Activated naive CD8-positive, alpha-beta T cell treated with anti-CD3 and anti-CD28 coated beads, Interleukin-2, amount 10 ng/mL, durations not matched to agents 7 days and 5 days (primary cell): ENCODE measurements at regions of chr17 and their contacts with region 1.

Region 1: GRCh38 chr17:28571255-28572122 is at the start of gene PIGS:
- DNase-seq: peak; percentile 92
- ATAC-seq: peak; percentile 99
- H3K4me3 Mint-ChIP-seq: peak within 1 kb of the TSS; percentile 95
- H3K27ac Mint-ChIP-seq: peak within 1 kb of the TSS; percentile 94
- H3K4me1 Mint-ChIP-seq: peaks cover 42% of the 10 kb centered on the region
- H3K27me3 Mint-ChIP-seq: no peaks in the 10 kb centered on the region
- total RNA-seq, gene PIGS: 60.5 to 63.1 TPM

Region 2: DNA sequence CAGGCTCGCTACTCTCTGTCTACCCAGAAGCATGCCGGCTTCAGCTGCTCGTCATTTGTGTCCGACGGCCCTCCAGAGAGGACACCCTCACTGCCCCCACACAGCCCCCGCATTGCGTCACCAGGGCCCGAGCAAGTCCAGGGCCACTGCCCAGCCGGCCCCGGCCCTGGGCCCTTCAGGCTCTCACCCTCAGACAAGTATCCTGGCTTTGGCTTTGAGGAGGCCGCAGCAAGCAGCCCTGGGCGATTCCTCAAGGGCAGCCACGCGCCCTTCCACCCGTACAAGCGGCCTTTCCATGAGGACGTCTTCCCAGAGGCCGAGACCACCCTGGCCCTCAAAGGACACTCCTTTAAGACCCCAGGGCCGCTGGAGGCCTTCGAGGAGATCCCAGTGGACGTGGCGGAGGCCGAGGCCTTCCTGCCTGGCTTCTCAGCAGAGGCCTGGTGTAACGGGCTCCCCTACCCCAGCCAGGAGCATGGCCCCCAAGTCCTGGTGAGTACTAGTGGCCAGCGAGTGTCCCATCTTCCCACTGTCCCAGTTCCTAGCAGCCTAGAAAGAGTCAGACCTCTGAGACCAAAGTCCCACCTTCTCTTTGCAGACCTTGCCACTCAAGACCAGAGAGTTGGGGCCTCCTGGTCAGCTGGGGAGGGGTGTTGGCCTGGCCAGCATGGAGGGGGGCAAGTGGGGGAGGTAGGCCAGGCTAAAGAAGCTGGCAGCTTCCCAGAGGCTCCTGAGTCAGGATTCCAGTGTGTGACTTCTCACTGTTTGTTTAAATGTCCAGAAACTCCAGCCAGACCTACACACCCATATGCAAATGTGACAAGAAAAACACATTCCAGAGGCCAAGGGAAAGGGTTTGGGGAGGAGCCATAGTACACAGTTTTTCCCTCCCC is 46.8 kb before region 1 on chr17:
- POLR2A ChIA-PET with region 1: no interaction called
- DNase-seq: no peak
- ATAC-seq: no peak
- H3K4me3 Mint-ChIP-seq: no peak overlapping the region
- H3K27ac Mint-ChIP-seq: no peak overlapping the region
- H3K4me1 Mint-ChIP-seq: no peaks in the 10 kb centered on the region
- H3K27me3 Mint-ChIP-seq: no peaks in the 10 kb centered on the region

Region 3: DNA sequence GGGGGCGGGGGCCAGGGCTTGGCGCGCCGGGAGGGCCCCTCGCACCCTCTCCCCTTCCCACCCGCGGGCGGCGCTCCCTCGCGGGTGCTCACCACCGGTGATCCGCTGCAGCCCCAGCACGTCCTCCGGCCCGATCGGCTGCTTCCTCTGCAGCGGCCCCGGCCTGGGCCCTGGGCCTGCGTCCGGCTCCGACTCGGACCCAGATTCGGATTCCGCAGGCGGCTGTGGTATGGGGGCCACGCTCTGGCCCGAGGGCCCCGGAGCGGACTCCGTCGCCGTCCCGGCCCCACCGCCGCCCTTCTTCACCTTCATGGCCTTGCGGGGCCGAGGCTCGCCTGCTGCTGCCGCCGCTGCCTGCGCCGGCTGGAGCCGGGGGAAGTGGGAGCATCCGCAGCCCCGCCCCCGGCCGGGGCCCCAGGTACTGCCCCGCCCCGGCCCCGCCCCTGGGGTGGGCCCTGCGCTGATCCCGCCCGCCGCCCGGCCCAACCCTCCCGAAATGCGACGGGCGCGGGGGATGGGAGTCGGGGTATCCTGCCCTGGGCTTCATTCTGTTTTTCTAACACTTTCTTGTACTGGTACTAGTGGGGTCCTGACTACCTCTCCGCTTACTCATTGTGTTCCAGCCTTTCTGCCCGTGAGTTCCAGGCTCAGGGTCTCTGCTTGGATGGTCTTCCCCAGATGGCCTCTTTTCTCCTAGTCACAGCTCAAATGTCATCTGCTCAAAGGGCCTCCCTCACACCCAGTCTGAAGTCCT is 19.1 kb before region 1 on chr17 and contains the start of gene UNC119:
- POLR2A ChIA-PET with region 1: interaction called, 33 read pairs
- DNase-seq: peak; percentile 91
- ATAC-seq: peak; percentile 60
- H3K4me3 Mint-ChIP-seq: peak within 1 kb of the TSS; percentile 96
- H3K27ac Mint-ChIP-seq: peak within 1 kb of the TSS; percentile 92
- H3K4me1 Mint-ChIP-seq: peaks cover 46% of the 10 kb centered on the region
- H3K27me3 Mint-ChIP-seq: no peaks in the 10 kb centered on the region
- total RNA-seq, gene UNC119: 54.9 to 57.8 TPM

Region 4: DNA sequence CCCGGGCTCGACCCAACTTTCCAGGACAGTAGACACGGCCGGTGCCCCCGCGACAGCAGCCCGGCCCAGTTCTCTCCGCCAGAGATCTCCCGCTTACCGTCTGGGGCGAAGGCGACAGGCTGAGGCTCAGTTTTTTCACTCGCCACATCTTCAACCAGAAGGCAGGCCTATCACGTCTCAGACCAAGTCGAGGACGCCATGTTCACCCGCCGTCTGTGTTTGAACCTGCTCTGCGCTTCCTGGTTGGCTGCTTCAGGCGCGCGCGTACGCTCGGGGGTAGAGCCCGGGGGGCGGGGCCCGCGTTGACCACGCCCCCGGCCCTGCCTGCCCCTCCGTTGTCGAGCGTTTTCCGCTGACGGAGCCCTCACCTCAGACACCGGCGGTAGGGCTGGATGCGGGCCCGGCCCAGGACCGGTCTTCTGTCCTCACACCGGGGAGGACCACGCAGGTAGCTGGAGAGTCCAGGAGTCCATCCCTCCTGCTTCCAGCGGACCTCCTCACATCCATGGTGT is 27.4 kb after region 1 on chr17 and contains the start of gene SPAG5:
- POLR2A ChIA-PET with region 1: interaction called, 33 read pairs
- DNase-seq: peak; percentile 98
- ATAC-seq: peak; percentile 92
- H3K4me3 Mint-ChIP-seq: peak within 1 kb of the TSS; percentile 90
- H3K27ac Mint-ChIP-seq: peak within 1 kb of the TSS; percentile 93
- H3K4me1 Mint-ChIP-seq: peaks cover 16% of the 10 kb centered on the region
- H3K27me3 Mint-ChIP-seq: no peaks in the 10 kb centered on the region
- total RNA-seq, gene SPAG5: 109 to 118 TPM

Region 5: DNA sequence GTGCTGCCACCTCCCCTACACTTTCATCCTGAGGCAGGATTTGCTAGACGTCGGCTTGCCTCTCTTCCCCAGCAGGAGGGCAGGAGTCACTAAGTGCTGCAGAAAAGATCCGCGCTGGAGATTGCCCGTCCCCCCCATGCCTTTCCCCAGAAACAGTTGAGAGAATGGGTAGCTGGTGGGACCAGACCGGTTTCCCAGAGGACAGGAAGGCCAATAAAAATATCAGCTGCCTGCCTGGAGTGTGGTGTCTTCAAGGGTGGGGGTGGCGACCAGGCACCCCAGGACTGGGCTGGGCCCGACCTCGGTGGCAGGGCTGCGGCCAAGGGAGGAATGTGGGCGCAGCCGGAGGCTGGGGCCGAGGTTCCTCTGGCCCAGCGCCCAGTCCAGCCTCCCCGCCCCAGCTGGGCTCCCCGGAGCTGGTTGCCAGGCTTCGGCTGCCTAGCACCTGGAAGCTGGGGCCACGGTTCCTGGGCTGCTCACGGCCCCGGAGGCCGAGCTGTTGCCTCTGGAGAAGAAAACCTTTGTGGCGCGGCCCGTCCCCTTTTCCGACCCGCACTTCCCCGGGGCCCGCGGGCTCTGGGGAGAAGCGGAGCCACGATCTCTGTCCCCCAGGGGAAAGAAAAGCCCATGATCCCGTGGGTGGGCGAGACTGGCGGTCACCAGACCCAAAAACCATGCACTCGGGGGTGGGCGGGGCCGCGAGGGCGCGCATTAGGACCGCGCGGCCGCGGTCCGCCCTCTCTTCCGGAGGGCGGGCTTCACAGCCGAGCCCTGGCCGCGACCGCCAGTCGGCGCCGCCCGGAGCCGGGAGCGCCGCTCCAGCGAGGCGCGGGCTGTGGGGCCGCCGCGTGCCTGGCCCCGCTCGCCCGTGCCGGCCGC is 172.0 kb after region 1 on chr17 and contains the start of gene TRAF4:
- POLR2A ChIA-PET with region 1: no interaction called
- DNase-seq: peak; percentile 88
- ATAC-seq: peak; percentile 86
- H3K4me3 Mint-ChIP-seq: peak within 1 kb of the TSS; percentile 91
- H3K27ac Mint-ChIP-seq: peak within 1 kb of the TSS; percentile 88
- H3K4me1 Mint-ChIP-seq: peaks cover 26% of the 10 kb centered on the region
- H3K27me3 Mint-ChIP-seq: no peaks in the 10 kb centered on the region
- total RNA-seq, gene TRAF4: 48.1 to 55.3 TPM